CD4-positive, alpha-beta memory T cell (primary cell): ENCODE measurements at regions of chr11 and their contacts with region 1.

Region 1: DNA sequence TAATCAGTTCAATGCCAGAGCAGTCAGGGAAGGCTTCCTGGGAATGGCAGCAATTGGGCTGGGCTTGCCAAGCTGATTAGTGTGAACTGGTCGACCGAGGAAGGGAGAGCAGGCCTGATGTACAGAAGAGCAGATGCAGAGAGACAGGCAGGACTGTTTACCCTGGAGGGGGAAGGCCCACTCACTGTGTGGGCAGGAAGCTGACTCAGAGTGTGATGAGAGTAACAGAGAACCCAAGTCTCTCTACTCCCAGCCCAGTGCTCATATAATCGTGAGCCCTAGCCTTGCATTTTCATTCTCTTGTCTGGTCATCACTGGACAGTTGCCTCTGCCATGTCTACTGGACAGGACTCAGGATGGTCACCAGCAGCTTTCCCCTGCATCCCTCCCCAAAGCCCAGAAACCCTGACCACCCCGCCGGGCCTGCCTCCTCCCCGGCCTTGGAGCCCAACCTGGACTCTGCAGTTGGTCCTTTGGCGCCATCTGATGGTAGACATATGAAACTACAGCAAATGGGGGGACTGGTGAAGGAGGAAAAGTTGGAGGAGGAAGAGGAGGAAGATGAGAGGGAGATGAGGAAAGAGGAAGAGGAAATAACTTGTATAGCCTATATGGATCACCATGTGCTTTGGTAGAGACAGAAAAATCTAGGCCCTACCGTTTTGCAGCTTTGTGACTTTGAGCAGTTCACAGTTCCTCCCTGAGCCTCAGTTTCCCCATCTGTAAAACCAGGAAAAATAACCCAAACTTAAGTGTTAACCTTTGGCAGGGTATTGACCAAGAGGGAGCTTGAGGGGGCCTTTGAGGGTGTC is 43.4 kb upstream of the PRDM11 start:
- DNase-seq: peak; percentile 69 to 76 (median 71)
- H3K4me3 ChIP-seq: peak overlapping the region in 1 of 2 donors; percentile 34
- H3K4me3 Mint-ChIP-seq: peak overlapping the region; percentile 39 to 88 (median 68)
- H3K27ac ChIP-seq: peak overlapping the region; percentile 16
- H3K27ac Mint-ChIP-seq: peak overlapping the region; percentile 4 to 94 (median 46)
- H3K4me1 ChIP-seq: peaks cover 17% of the 10 kb centered on the region
- H3K4me1 Mint-ChIP-seq: peaks cover 9 to 20% (median 18%) of the 10 kb centered on the region in 4 donors
- H3K27me3 ChIP-seq: no peaks in the 10 kb centered on the region
- H3K27me3 Mint-ChIP-seq: peaks cover 5 to 7% of the 10 kb centered on the region in 2 donors

Region 2: GRCh38 chr11:44927174-44927661 is 175.8 kb before region 1 on chr11:
- CTCF ChIA-PET with region 1: interaction called, 1,298 read pairs
- POLR2A ChIA-PET with region 1: interaction called, 11 read pairs
- intact Hi-C with region 1: loop called (anchors 1 kb)
- DNase-seq: peak in 4 of 5 donors; percentile 35 to 51 (median 38)
- H3K4me3 ChIP-seq: no peak overlapping the region
- H3K4me3 Mint-ChIP-seq: no peak overlapping the region
- H3K27ac ChIP-seq: no peak overlapping the region
- H3K27ac Mint-ChIP-seq: peak overlapping the region in 1 of 7 donors; percentile 31
- H3K4me1 ChIP-seq: no peaks in the 10 kb centered on the region
- H3K4me1 Mint-ChIP-seq: peaks cover 0 to 7% (median 0%) of the 10 kb centered on the region in 4 donors
- H3K27me3 ChIP-seq: no peaks in the 10 kb centered on the region
- H3K27me3 Mint-ChIP-seq: no peaks in the 10 kb centered on the region

Region 3: DNA sequence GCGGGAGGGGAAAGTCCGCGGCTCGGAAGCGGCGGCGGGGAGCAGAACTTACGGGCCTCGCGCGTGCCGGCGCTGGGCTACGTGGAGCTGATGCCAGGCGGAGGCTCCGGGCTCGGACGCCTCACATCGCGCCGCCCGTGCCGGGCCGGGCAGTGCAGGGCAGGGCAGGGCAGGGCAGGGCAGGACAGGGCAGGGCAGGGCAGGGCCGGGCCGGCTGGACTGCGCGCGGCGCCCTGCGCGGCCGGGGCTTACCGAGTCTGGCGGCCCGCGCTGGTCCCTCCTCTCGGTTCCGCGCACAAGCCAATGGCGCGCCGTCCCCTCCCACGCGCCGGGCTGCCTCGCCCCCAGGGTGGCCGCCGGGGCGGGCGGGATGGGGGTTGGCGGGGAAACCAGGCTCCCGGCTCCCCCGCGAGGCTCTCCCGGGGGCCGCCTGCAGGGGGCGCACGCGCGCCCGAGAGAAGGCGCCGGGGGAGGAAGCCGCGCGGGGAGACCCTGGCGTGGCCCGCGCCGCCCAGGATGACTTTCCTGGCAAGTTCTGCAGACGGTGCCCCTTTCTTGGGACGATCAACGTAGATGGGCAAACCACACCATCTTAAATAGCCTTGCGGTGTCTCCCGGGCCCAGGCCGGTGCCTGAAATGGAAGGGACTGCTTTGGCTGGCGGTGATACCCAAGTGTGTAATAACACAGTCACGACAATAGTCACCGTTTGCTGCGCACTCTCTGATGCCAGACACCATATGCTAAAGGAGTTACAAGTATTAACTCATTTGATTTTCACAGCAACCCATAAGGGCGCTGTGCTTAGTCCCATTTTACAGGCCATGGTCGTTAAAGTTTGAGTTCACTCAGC is 152.2 kb before region 1 on chr11 and contains the start of gene TP53I11:
- CTCF ChIA-PET with region 1: interaction called, 80 read pairs
- POLR2A ChIA-PET with region 1: interaction called, 11 read pairs
- intact Hi-C with region 1: loop called (anchors 5 kb)
- DNase-seq: peak; percentile 53 to 57 (median 53)
- H3K4me3 ChIP-seq: peak within 1 kb of the TSS; percentile 36 to 59
- H3K4me3 Mint-ChIP-seq: peak within 1 kb of the TSS; percentile 71 to 87 (median 79)
- H3K27ac ChIP-seq: peak within 1 kb of the TSS; percentile 26
- H3K27ac Mint-ChIP-seq: peak within 1 kb of the TSS in 4 of 7 donors; percentile 14 to 61 (median 42)
- H3K4me1 ChIP-seq: peaks cover 3% of the 10 kb centered on the region
- H3K4me1 Mint-ChIP-seq: peaks cover 0 to 14% (median 3%) of the 10 kb centered on the region in 4 donors
- H3K27me3 ChIP-seq: no peaks in the 10 kb centered on the region
- H3K27me3 Mint-ChIP-seq: no peaks in the 10 kb centered on the region
- total RNA-seq, gene TP53I11: 4.0 to 7.0 TPM

Region 4: GRCh38 chr11:44977476-44977984 is 125.5 kb before region 1 on chr11:
- CTCF ChIA-PET with region 1: interaction called, 14 read pairs
- POLR2A ChIA-PET with region 1: no interaction called
- intact Hi-C with region 1: no loop called
- DNase-seq: peak in 4 of 5 donors; percentile 16 to 31 (median 22)
- H3K4me3 ChIP-seq: peak overlapping the region in 1 of 2 donors; percentile 7
- H3K4me3 Mint-ChIP-seq: peak overlapping the region in 1 of 8 donors; percentile 37
- H3K27ac ChIP-seq: no peak overlapping the region
- H3K27ac Mint-ChIP-seq: no peak overlapping the region
- H3K4me1 ChIP-seq: peaks cover 46% of the 10 kb centered on the region
- H3K4me1 Mint-ChIP-seq: peaks cover 9 to 17% (median 13%) of the 10 kb centered on the region in 4 donors
- H3K27me3 ChIP-seq: no peaks in the 10 kb centered on the region
- H3K27me3 Mint-ChIP-seq: no peaks in the 10 kb centered on the region

Region 5: DNA sequence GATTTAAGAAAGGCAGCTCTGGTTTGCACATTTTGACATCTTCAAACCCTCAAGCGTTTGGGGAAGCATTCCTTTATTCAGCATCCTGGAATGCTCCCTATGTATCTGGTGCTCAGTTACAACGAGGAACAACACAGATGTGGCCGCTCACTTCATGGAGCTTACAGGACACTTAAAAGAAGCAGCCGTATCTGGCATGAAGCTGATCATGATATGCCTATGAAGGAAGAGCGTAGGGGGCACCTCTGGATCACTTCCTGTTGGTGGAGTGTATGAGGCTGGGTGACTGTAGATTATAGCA is 80.0 kb before region 1 on chr11:
- CTCF ChIA-PET with region 1: no interaction called
- POLR2A ChIA-PET with region 1: no interaction called
- intact Hi-C with region 1: no loop called
- DNase-seq: no peak
- H3K4me3 ChIP-seq: no peak overlapping the region
- H3K4me3 Mint-ChIP-seq: no peak overlapping the region
- H3K27ac ChIP-seq: no peak overlapping the region
- H3K27ac Mint-ChIP-seq: peak overlapping the region in 1 of 7 donors; percentile 79
- H3K4me1 ChIP-seq: peaks cover 9% of the 10 kb centered on the region
- H3K4me1 Mint-ChIP-seq: peaks cover 9 to 19% (median 11%) of the 10 kb centered on the region in 4 donors
- H3K27me3 ChIP-seq: no peaks in the 10 kb centered on the region
- H3K27me3 Mint-ChIP-seq: peaks cover 7 to 10% of the 10 kb centered on the region in 2 donors

Region 6: GRCh38 chr11:45079943-45080719 is 22.9 kb before region 1 on chr11:
- CTCF ChIA-PET with region 1: interaction called, 96 read pairs
- POLR2A ChIA-PET with region 1: interaction called, 26 read pairs
- intact Hi-C with region 1: loop called (anchors 1 kb)
- DNase-seq: peak; percentile 54 to 76 (median 64)
- H3K4me3 ChIP-seq: peak overlapping the region in 1 of 2 donors; percentile 15
- H3K4me3 Mint-ChIP-seq: peak overlapping the region; percentile 45 to 82 (median 69)
- H3K27ac ChIP-seq: peak overlapping the region; percentile 56
- H3K27ac Mint-ChIP-seq: peak overlapping the region; percentile 83 to 96 (median 91)
- H3K4me1 ChIP-seq: peaks cover 38% of the 10 kb centered on the region
- H3K4me1 Mint-ChIP-seq: peaks cover 31 to 61% (median 48%) of the 10 kb centered on the region in 4 donors
- H3K27me3 ChIP-seq: no peaks in the 10 kb centered on the region
- H3K27me3 Mint-ChIP-seq: no peaks in the 10 kb centered on the region

Region 7: GRCh38 chr11:45354976-45355705 is 252.1 kb after region 1 on chr11:
- CTCF ChIA-PET with region 1: interaction called, 10 read pairs
- POLR2A ChIA-PET with region 1: no interaction called
- intact Hi-C with region 1: no loop called
- DNase-seq: peak; percentile 86 to 88 (median 87)
- H3K4me3 ChIP-seq: peak overlapping the region; percentile 68 to 80
- H3K4me3 Mint-ChIP-seq: peak overlapping the region; percentile 79 to 90 (median 85)
- H3K27ac ChIP-seq: peak overlapping the region; percentile 55
- H3K27ac Mint-ChIP-seq: peak overlapping the region; percentile 67 to 96 (median 89)
- H3K4me1 ChIP-seq: peaks cover 19% of the 10 kb centered on the region
- H3K4me1 Mint-ChIP-seq: peaks cover 15 to 17% (median 16%) of the 10 kb centered on the region in 4 donors
- H3K27me3 ChIP-seq: no peaks in the 10 kb centered on the region
- H3K27me3 Mint-ChIP-seq: peaks cover 0 to 9% of the 10 kb centered on the region in 2 donors